HEK293T (cell line): ENCODE measurements at regions of chr14 and their contacts with region 1.

Region 1: DNA sequence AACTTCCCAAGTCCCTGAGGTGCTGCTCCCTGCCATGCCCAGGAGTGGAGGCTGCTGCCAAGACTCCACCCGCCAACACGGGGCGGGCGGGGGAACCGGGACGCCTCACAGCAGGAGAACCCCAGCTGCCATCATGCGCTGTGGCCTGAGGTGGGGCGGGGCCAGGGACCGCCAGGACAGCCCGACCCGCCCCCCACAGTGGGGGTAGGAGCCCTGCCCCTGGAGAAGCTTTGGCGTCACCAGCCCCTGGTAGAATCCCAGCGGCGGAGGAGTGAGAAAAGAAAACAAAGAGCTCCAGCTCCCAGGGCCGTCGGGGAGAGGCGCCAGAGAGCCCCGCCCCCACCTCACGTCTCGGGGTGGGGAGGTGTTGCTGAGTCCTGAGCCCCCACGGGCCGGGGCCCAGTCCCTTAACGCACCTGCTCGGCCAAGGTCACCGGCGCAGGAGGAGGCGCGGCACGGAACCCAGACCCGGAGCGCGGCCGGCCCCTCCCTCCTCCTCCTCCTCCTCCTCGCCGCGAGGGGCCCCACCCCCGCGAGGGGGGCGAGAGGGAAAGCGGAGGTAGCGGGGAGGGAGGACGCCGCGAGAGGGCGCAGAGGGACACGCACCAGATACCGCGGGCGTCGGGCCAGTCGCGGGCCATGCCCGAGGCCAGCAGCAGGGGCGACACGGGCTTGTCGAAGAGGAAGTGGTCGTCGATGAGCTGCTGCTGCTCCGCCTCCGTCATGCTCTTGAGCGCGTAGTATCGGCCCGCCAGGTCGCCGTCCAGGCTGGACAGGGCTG is 1.8 kb downstream of the CKB start:
- DNase-seq: peak; percentile 71

Region 2: GRCh38 chr14:103391048-103391447 is 129.8 kb before region 1 on chr14:
- CTCF ChIA-PET with region 1: no interaction called
- POLR2A ChIA-PET with region 1: no interaction called
- DNase-seq: no peak

Region 3: GRCh38 chr14:103540821-103541708 is 20.2 kb after region 1 on chr14:
- CTCF ChIA-PET with region 1: interaction called, 26 read pairs
- POLR2A ChIA-PET with region 1: interaction called, 16 read pairs
- DNase-seq: no peak

Region 4: DNA sequence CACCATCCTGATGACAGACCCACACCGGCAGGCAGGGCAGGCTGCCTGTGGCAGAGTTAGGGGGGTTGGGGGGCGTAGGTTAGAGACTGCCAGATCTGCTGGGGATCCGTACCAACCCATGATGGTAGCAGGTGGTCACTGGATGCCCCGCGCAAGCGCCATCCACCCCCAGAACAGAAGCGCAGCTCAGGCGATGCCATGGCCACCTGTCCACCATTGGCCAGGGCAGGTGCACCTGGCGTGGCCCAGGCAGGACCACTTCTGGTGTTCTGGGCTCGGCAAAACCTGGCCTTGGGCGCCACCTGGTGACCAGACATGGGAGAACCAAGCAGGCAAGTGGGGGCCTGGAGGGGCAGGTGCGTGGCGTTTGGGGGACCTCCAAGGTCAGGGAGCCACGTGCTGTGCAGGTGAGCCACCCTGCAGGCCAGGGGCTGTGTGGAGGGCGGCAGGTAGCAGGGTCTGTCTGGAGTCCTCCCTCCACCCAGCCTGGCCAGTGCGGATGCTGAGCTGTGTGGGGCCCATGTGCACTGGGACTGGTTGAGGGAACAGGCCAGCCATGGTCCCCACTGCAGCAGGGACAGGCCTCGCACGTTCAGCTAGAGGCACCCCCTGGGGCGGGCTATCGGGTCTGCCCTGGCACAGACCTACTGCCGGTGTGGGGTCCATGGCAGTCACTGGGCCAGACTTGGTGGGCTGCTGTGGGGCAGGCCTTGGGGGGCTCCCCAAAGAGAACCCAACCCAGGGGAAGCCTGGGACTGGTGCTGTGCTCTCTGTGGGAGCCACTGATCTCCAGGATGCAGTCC is 26.0 kb after region 1 on chr14:
- CTCF ChIA-PET with region 1: interaction called, 26 read pairs
- POLR2A ChIA-PET with region 1: interaction called, 40 read pairs
- DNase-seq: peak; percentile 85

Region 5: GRCh38 chr14:103552011-103552845 is 31.4 kb after region 1 on chr14:
- CTCF ChIA-PET with region 1: interaction called, 26 read pairs
- POLR2A ChIA-PET with region 1: interaction called, 40 read pairs
- DNase-seq: no peak

Region 6: GRCh38 chr14:103558071-103558882 is 37.4 kb after region 1 on chr14:
- CTCF ChIA-PET with region 1: interaction called, 19 read pairs
- POLR2A ChIA-PET with region 1: interaction called, 40 read pairs
- DNase-seq: no peak

Region 7: DNA sequence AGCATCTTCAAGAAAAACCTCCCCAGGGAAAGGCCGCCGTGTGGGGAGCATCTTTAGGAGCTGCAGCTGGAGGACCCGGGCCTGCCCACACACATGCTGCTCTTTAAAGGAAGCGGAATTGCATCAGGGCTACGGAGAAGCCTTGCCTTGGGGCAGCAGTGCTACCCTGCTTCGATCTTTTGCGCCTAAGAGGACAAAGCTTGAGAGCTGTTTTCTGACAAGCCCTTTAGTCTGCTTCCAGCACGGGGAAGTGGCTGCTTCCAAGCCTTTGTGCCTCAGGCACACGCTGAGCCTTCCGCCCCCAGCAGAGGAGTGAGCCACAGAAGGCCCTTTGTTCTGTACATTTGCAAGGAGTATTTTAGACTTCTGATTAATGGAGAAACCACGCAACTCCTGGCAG is 73.4 kb after region 1 on chr14:
- CTCF ChIA-PET with region 1: no interaction called
- POLR2A ChIA-PET with region 1: no interaction called
- DNase-seq: no peak